CD4-positive, alpha-beta memory T cell (primary cell): ENCODE measurements at regions of chr14 and their contacts with region 1.

Region 1: DNA sequence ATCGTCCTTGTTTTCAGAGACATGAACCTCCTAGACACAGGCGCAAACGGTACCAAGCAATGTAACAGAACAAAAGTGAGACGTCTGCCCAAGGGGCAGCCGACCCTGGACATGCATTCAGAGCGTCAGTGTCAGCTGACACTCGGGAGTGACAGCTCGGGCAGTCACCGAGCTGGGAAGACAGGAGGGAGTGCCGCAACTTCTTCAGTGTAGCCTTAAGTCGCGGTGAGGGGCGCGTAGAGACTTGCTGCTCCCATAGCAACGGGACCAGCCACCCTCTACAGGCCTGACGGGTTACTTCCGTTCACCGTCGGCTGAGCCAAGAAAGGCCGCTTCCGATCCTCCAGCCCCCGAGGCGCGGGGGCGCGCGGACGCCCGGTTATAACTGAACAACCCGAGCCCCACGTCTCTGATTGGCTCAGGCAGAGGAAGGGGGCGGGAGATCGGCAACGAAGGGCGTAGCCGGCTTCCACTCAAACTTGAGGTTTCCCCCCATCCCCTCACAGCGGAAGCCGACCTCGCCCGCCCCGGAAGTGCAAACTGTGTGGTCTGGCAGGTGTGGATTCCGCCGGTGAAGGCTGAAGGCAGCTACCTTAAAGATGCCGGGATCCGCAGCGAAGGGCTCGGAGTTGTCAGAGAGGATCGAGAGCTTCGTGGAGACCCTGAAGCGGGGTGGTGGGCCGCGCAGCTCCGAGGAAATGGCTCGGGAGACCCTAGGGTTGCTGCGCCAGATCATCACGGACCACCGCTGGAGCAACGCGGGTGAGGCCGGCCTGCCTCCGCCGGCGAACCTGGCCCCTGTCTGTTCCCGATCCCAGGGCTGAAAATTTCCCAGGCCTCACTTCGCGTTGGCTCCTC is at the start of gene EIF2B2:
- DNase-seq: peak; percentile 99
- H3K4me3 ChIP-seq: peak within 1 kb of the TSS; percentile 70 to 89
- H3K4me3 Mint-ChIP-seq: peak within 1 kb of the TSS; percentile 93 to 98 (median 97)
- H3K27ac ChIP-seq: peak within 1 kb of the TSS; percentile 80
- H3K27ac Mint-ChIP-seq: peak within 1 kb of the TSS; percentile 94 to 100 (median 99)
- H3K4me1 ChIP-seq: peaks cover 25% of the 10 kb centered on the region
- H3K4me1 Mint-ChIP-seq: peaks cover 30 to 48% (median 38%) of the 10 kb centered on the region in 4 donors
- H3K27me3 ChIP-seq: no peaks in the 10 kb centered on the region
- H3K27me3 Mint-ChIP-seq: no peaks in the 10 kb centered on the region
- total RNA-seq, gene EIF2B2: 31.3 to 31.7 TPM

Region 2: DNA sequence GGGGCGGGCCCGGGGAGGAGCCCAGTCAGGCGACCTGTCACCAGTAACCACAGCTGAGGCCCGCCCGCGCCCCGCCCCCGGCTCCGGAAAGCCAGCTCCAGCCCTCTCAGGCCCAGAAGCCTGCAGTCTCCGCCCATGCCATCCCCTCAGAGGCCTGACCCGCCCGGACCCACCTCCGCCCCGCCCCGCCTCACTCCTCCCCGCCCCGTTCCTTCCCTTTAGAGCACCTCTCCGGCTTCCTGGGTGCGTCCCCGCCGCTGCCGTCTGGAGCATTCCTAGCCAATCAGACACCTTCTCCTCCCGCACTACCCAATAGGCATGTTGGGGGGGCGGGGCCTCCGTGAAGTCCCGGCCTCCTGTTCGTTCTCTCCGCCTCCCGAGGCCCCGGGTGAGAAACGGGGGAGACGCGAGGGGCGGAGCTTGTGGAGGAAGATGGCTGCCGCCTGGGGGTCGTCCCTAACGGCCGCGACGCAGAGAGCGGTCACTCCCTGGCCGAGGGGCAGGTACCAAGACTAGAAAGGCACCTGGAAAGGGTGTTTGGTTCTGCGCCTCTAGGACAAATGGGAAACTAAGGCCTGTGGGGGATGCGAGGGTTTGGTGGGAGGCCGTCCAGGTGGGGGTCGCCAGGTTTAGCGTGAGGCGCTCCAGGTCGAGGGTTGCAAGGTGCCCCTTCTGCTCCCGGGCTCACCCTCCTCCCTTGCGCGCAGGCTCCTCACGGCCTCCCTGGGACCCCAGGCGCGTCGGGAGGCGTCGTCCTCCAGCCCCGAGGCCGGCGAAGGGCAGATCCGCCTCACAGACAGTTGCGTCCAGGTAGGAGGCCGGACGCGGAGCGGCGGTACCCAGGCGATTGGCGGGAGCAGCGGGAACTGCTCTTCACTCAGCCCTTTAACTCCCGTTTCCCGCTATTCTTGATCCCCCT is 509.0 kb before region 1 on chr14 and contains the start of gene ISCA2:
- CTCF ChIA-PET with region 1: no interaction called
- POLR2A ChIA-PET with region 1: no interaction called
- intact Hi-C with region 1: loop called (anchors 1 kb)
- DNase-seq: peak; percentile 97 to 100 (median 99)
- H3K4me3 ChIP-seq: peak within 1 kb of the TSS; percentile 79 to 89
- H3K4me3 Mint-ChIP-seq: no peak within 1 kb of the TSS
- H3K27ac ChIP-seq: peak within 1 kb of the TSS; percentile 86
- H3K27ac Mint-ChIP-seq: peak within 1 kb of the TSS in 6 of 7 donors; percentile 91 to 97 (median 94)
- H3K4me1 ChIP-seq: peaks cover 39% of the 10 kb centered on the region
- H3K4me1 Mint-ChIP-seq: peaks cover 24 to 31% (median 27%) of the 10 kb centered on the region in 4 donors
- H3K27me3 ChIP-seq: no peaks in the 10 kb centered on the region
- H3K27me3 Mint-ChIP-seq: no peaks in the 10 kb centered on the region
- total RNA-seq, gene ISCA2: 31.3 to 33.1 TPM

Region 3: DNA sequence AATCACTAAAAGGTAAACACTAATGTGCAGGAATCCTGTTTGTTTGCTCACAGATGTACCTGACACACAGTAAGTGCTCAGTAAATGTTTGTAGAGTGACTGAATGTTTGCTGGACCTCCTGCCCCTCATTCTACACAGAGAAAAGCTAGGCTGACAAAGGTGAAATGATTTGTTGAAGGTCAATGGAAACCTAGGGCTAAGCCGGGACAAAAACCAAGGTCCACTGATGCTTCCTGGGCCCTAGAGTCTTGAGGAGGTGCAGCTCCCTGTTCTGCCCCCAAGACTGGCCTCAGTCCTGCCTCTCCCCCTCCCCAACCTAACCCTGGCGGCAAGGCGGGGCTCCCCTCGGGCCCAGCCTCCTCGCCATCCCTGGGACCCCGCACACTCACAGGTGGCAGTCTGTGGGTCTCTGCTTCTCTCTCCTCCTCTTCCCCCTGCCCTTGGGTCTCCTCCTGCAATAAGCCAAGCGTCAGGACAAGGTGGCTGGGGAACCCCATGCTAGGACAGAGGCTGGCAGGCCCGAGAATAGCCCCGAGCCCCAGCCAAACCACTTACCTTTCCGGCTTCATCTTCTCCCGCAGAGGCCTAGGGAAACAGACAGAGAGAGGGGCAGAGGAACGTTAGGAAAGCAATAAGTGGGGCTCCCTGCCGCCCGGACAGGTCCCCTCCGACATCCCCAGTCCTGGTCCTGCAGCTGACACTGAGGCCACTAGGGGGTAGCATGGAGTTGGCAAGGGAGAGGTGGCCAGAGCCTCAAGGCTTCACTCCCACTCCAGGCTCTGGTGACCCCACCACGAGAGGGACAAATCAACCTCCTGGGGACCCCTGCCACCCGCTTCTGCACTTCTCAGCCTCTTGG is 56.6 kb before region 1 on chr14:
- CTCF ChIA-PET with region 1: interaction called, 3 read pairs
- POLR2A ChIA-PET with region 1: interaction called, 3 read pairs
- intact Hi-C with region 1: loop called (anchors 1 kb)
- DNase-seq: peak; percentile 62 to 74 (median 63)
- H3K4me3 ChIP-seq: no peak overlapping the region
- H3K4me3 Mint-ChIP-seq: peak overlapping the region in 5 of 8 donors; percentile 22 to 81 (median 63)
- H3K27ac ChIP-seq: no peak overlapping the region
- H3K27ac Mint-ChIP-seq: peak overlapping the region; percentile 21 to 93 (median 70)
- H3K4me1 ChIP-seq: peaks cover 37% of the 10 kb centered on the region
- H3K4me1 Mint-ChIP-seq: peaks cover 13 to 32% (median 30%) of the 10 kb centered on the region in 4 donors
- H3K27me3 ChIP-seq: no peaks in the 10 kb centered on the region
- H3K27me3 Mint-ChIP-seq: peaks cover 0 to 2% of the 10 kb centered on the region in 2 donors

Region 4: GRCh38 chr14:75050852-75051554 is 48.4 kb after region 1 on chr14 and contains the start of gene MLH3:
- CTCF ChIA-PET with region 1: no interaction called
- POLR2A ChIA-PET with region 1: no interaction called
- intact Hi-C with region 1: loop called (anchors 2 kb)
- DNase-seq: peak; percentile 72 to 83 (median 79)
- H3K4me3 ChIP-seq: peak within 1 kb of the TSS; percentile 63 to 73
- H3K4me3 Mint-ChIP-seq: peak within 1 kb of the TSS; percentile 89 to 96 (median 94)
- H3K27ac ChIP-seq: peak within 1 kb of the TSS; percentile 80
- H3K27ac Mint-ChIP-seq: peak within 1 kb of the TSS; percentile 93 to 98 (median 97)
- H3K4me1 ChIP-seq: peaks cover 22% of the 10 kb centered on the region
- H3K4me1 Mint-ChIP-seq: peaks cover 14 to 41% (median 31%) of the 10 kb centered on the region in 4 donors
- H3K27me3 ChIP-seq: no peaks in the 10 kb centered on the region
- H3K27me3 Mint-ChIP-seq: no peaks in the 10 kb centered on the region
- total RNA-seq, gene MLH3: 24.9 to 26.8 TPM

Region 5: DNA sequence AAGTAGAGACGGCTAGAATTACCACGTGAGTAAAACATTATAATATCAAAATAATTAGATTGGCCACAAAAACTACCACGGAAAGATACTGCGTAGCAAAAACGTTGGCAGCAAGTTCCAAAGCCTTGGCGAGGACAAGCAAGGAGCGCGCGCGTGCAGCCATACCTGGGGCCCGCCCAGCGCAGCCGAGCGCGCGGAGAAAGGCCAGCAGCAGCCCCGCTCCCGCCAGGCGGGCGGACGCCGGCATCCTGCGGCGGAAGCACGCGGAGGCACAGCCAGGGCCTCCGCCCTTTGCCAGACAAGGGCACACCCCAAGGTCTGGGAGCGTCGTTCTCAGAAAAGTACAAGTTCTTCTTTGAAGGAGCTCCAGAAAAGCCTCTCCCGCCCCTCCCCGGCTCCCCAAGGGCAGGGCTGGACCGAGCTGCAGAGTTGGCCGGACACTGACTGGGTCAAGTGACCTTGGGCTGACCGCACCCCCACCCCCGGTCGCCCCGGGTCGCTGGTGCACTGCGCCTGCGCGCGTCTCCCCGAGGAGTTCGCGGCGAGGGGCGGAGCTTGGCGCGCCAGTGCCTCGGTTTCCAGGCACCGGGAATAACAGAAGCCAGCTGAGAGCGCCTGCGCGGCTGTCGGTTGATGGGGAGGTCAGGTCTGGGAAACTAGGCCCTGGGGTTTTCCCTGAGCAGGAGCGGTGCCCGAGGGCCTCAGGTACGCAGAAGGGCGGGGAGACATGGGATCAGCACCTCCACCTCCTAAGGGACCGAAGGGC is 66.6 kb after region 1 on chr14 and contains the start of gene ZC2HC1C:
- CTCF ChIA-PET with region 1: no interaction called
- POLR2A ChIA-PET with region 1: interaction called, 16 read pairs
- intact Hi-C with region 1: loop called (anchors 1 kb)
- DNase-seq: peak; percentile 37 to 51 (median 41)
- H3K4me3 ChIP-seq: peak within 1 kb of the TSS in 1 of 2 donors; percentile 58
- H3K4me3 Mint-ChIP-seq: peak within 1 kb of the TSS in 6 of 8 donors; percentile 22 to 75 (median 71)
- H3K27ac ChIP-seq: peak within 1 kb of the TSS; percentile 32
- H3K27ac Mint-ChIP-seq: peak within 1 kb of the TSS in 6 of 7 donors; percentile 18 to 89 (median 74)
- H3K4me1 ChIP-seq: peaks cover 15% of the 10 kb centered on the region
- H3K4me1 Mint-ChIP-seq: peaks cover 3 to 10% (median 6%) of the 10 kb centered on the region in 4 donors
- H3K27me3 ChIP-seq: no peaks in the 10 kb centered on the region
- H3K27me3 Mint-ChIP-seq: no peaks in the 10 kb centered on the region
- total RNA-seq, gene ZC2HC1C: 0.76 to 0.97 TPM

Region 6: DNA sequence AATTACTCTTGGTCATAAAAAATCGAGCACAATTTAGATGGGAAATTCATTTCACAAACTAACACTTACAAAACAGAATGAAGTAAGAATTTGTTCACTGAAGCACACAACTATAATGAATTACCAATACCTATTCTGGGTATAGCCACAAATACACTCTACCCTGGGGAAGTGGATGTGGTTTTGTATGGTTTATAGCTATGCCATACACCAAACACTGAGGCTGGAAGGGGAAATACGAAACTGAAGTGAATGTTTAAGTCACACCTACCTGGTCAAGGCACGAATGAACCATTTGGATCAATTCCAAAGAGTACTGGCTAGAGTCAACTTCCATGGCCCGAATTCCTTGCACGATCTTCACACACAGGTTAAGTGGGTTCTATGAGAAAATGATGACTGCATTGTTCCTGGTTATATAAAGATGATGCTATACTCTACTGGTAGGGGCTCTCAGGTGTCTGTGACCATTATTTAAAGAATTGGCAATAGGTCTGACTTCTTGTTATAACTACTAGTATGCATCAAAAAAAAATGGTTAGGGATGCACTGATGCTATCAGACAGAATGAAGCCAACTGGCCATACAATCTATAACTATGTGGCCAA is 111.4 kb after region 1 on chr14:
- CTCF ChIA-PET with region 1: no interaction called
- POLR2A ChIA-PET with region 1: no interaction called
- intact Hi-C with region 1: no loop called
- DNase-seq: peak in 2 of 5 donors; percentile 3 to 11
- H3K4me3 ChIP-seq: no peak overlapping the region
- H3K4me3 Mint-ChIP-seq: no peak overlapping the region
- H3K27ac ChIP-seq: no peak overlapping the region
- H3K27ac Mint-ChIP-seq: no peak overlapping the region
- H3K4me1 ChIP-seq: peaks cover 10% of the 10 kb centered on the region
- H3K4me1 Mint-ChIP-seq: peaks cover 6 to 16% (median 13%) of the 10 kb centered on the region in 4 donors
- H3K27me3 ChIP-seq: no peaks in the 10 kb centered on the region
- H3K27me3 Mint-ChIP-seq: no peaks in the 10 kb centered on the region

Region 7: GRCh38 chr14:75126679-75127473 is 124.3 kb after region 1 on chr14 and contains the start of gene NEK9:
- CTCF ChIA-PET with region 1: no interaction called
- POLR2A ChIA-PET with region 1: interaction called, 6 read pairs
- intact Hi-C with region 1: loop called (anchors 5 kb)
- DNase-seq: peak; percentile 86 to 92 (median 90)
- H3K4me3 ChIP-seq: peak within 1 kb of the TSS; percentile 80 to 99
- H3K4me3 Mint-ChIP-seq: peak within 1 kb of the TSS; percentile 88 to 98 (median 97)
- H3K27ac ChIP-seq: peak within 1 kb of the TSS; percentile 94
- H3K27ac Mint-ChIP-seq: peak within 1 kb of the TSS; percentile 95 to 99 (median 99)
- H3K4me1 ChIP-seq: peaks cover 42% of the 10 kb centered on the region
- H3K4me1 Mint-ChIP-seq: peaks cover 29 to 52% (median 34%) of the 10 kb centered on the region in 4 donors
- H3K27me3 ChIP-seq: no peaks in the 10 kb centered on the region
- H3K27me3 Mint-ChIP-seq: no peaks in the 10 kb centered on the region
- total RNA-seq, gene NEK9: 129 to 133 TPM

Region 8: GRCh38 chr14:75205591-75205990 is 203.0 kb after region 1 on chr14:
- CTCF ChIA-PET with region 1: no interaction called
- POLR2A ChIA-PET with region 1: no interaction called
- intact Hi-C with region 1: no loop called
- DNase-seq: no peak
- H3K4me3 ChIP-seq: no peak overlapping the region
- H3K4me3 Mint-ChIP-seq: no peak overlapping the region
- H3K27ac ChIP-seq: no peak overlapping the region
- H3K27ac Mint-ChIP-seq: peak overlapping the region in 2 of 7 donors; percentile 20 to 48
- H3K4me1 ChIP-seq: peaks cover 11% of the 10 kb centered on the region
- H3K4me1 Mint-ChIP-seq: peaks cover 4 to 18% (median 11%) of the 10 kb centered on the region in 4 donors
- H3K27me3 ChIP-seq: no peaks in the 10 kb centered on the region
- H3K27me3 Mint-ChIP-seq: no peaks in the 10 kb centered on the region